Activated CD4-positive, alpha-beta T cell treated with anti-CD3 and anti-CD28 coated beads for 36 hours (primary cell): ENCODE measurements at regions of chr20 and their contacts with region 1.

Region 1: DNA sequence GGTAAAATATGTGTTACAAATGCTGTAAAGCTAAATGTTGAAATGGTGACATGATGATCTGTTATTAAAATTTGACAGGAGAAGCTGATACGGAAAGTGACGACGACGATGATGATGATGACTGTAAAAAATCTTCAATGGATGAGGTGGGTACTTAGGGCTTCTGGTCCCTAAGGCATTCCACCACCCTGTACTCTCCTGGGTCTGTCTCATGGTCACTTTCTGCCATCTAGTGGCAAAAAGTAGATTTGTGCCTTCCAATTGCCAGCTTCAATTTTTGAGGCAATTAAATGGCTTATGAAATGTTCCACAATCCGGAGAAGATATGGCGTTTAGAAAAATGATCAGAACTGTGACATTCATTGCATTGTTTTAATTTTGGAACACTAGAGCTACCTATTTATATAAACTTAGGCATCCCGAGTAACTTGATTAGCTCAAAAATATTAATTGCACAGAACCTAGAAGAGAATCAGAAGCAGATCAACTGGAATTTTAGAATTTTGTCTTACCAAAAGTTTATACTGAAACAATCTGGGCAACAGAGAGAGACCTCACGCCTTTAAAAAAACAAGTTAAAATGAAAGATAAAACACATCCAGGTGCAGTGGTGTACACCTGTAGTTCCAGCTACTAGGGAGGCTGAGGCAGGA is 346.5 kb upstream of the PLCB4 start:
- DNase-seq: peak; percentile 19
- ATAC-seq: peak; percentile 64
- H3K4me3 Mint-ChIP-seq: no peak overlapping the region
- H3K27ac Mint-ChIP-seq: no peak overlapping the region
- H3K4me1 Mint-ChIP-seq: no peaks in the 10 kb centered on the region
- H3K27me3 Mint-ChIP-seq: no peaks in the 10 kb centered on the region

Region 2: DNA sequence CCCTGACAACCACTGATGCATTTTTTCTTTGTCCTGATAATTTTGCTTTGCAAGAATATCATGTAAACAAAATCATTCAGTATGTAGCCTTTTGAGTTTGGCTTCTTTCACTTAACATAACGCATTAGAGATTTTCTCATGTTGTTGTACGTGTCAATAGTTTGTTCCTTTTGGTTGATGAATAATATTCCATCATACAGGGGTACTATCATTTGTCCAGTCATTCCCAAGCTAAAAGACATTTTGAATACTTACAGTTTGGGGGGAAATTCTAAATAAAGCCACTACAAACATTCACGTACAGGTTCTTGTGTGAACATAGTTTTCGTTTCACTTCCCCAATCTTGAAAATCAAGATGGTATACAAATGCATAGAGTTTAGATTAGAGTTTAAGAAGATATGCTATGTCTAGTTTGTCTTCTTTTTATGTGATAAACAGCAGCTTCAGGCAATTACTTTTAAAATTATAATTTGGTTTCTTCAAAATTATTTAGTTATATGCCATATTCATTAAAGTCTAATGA is 787.3 kb before region 1 on chr20:
- CTCF ChIA-PET with region 1: interaction called, 55 read pairs
- POLR2A ChIA-PET with region 1: interaction called, 3 read pairs
- intact Hi-C with region 1: loop called (anchors 1 kb)
- DNase-seq: no peak
- ATAC-seq: no peak
- H3K4me3 Mint-ChIP-seq: no peak overlapping the region
- H3K27ac Mint-ChIP-seq: no peak overlapping the region
- H3K4me1 Mint-ChIP-seq: no peaks in the 10 kb centered on the region
- H3K27me3 Mint-ChIP-seq: peaks cover 22% of the 10 kb centered on the region

Region 3: DNA sequence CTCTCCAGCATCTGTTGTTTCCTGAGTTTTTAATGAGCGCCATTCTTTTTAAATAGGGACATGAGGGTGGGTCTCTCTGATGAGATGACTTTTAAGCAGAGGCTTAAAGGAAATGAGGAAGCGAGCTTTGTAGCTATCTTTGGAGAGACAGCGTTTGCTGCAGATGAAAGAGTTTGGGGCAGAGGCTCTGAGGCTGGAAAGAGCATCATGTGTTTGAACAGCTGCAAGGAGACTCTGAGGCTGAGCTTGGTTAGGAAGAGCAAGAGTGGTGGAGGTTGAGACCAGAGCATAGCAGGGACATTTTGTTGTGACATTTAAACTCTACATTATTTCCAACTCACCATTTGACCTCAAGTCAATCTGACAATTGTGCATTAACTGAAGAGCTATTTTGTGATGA is 664.5 kb before region 1 on chr20:
- CTCF ChIA-PET with region 1: no interaction called
- POLR2A ChIA-PET with region 1: no interaction called
- intact Hi-C with region 1: loop called in 1 of 2 experiments (anchors 5 kb)
- DNase-seq: no peak
- ATAC-seq: no peak
- H3K4me3 Mint-ChIP-seq: no peak overlapping the region
- H3K27ac Mint-ChIP-seq: no peak overlapping the region
- H3K4me1 Mint-ChIP-seq: no peaks in the 10 kb centered on the region
- H3K27me3 Mint-ChIP-seq: peaks cover 1% of the 10 kb centered on the region

Region 4: GRCh38 chr20:8305449-8305978 is 416.9 kb before region 1 on chr20:
- CTCF ChIA-PET with region 1: interaction called, 3 read pairs
- POLR2A ChIA-PET with region 1: no interaction called
- intact Hi-C with region 1: loop called (anchors 5 to 10 kb)
- DNase-seq: peak; percentile 85
- ATAC-seq: peak; percentile 88
- H3K4me3 Mint-ChIP-seq: no peak overlapping the region
- H3K27ac Mint-ChIP-seq: no peak overlapping the region
- H3K4me1 Mint-ChIP-seq: peaks cover 6% of the 10 kb centered on the region
- H3K27me3 Mint-ChIP-seq: peaks cover 2% of the 10 kb centered on the region

Region 5: DNA sequence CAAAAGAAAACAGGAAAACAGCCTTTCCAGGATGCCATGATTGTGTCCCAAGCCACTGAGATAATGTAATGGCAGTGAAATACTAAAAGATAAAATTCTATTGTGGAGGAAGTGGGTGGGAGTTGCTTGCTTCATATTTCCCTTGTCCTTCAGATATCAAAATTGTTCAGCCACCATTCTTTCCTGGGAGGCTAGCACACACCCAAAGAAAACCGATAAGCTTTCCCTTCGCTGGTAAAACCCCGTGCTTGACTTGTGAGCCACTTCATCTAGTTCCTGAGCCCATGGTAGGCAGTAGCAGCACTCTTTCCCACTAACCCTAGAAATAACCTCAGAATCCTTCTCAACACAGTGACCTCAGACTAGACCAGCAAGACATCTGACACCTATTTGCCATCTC is 10.9 kb before region 1 on chr20:
- CTCF ChIA-PET with region 1: interaction called, 25 read pairs
- POLR2A ChIA-PET with region 1: no interaction called
- intact Hi-C with region 1: no loop called
- DNase-seq: no peak
- ATAC-seq: no peak
- H3K4me3 Mint-ChIP-seq: no peak overlapping the region
- H3K27ac Mint-ChIP-seq: no peak overlapping the region
- H3K4me1 Mint-ChIP-seq: no peaks in the 10 kb centered on the region
- H3K27me3 Mint-ChIP-seq: no peaks in the 10 kb centered on the region

Region 6: GRCh38 chr20:8749986-8750385 is 27.6 kb after region 1 on chr20:
- CTCF ChIA-PET with region 1: interaction called, 16 read pairs
- POLR2A ChIA-PET with region 1: no interaction called
- intact Hi-C with region 1: no loop called
- DNase-seq: no peak
- ATAC-seq: no peak
- H3K4me3 Mint-ChIP-seq: no peak overlapping the region
- H3K27ac Mint-ChIP-seq: no peak overlapping the region
- H3K4me1 Mint-ChIP-seq: no peaks in the 10 kb centered on the region
- H3K27me3 Mint-ChIP-seq: no peaks in the 10 kb centered on the region

Region 7: DNA sequence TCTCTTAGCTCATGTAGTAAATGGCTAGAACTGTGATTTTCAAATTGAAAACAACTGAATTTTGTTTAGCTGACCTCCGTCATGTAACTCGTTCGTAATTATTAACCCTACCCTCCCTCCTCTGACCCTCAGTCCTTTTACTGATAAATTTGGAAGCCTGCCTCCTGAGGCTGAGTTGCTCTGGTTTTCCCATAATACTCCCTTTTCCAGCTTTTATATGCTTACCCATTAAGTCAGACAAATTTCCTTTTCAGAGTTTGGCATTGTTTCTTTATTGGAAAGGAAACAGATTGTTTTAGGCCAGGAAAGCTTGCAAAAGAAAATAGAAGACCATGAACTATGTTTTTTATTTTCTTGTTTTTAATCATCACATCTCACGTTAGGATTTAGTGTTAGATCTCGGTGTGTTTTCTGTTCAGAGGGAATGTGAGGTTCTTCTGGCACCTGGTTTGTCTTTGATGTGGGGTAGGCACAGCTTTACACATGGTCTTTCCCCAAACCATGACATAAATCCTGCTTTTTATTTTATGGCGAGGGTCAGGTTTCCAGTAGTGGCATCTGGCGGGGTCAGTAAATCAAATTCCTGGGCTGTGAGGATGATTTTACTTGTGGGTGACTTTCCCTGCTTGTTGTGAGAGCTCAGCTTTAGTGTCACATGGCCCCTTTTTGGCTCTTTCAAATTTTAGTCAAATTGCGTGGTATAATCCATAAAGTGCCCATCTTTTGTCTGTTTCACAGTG is 371.0 kb after region 1 on chr20:
- CTCF ChIA-PET with region 1: no interaction called
- POLR2A ChIA-PET with region 1: no interaction called
- intact Hi-C with region 1: no loop called
- DNase-seq: no peak
- ATAC-seq: no peak
- H3K4me3 Mint-ChIP-seq: no peak overlapping the region
- H3K27ac Mint-ChIP-seq: no peak overlapping the region
- H3K4me1 Mint-ChIP-seq: no peaks in the 10 kb centered on the region
- H3K27me3 Mint-ChIP-seq: no peaks in the 10 kb centered on the region